Caco-2 (cell line): ENCODE measurements at regions of chr15 and their contacts with region 1.

Region 1: DNA sequence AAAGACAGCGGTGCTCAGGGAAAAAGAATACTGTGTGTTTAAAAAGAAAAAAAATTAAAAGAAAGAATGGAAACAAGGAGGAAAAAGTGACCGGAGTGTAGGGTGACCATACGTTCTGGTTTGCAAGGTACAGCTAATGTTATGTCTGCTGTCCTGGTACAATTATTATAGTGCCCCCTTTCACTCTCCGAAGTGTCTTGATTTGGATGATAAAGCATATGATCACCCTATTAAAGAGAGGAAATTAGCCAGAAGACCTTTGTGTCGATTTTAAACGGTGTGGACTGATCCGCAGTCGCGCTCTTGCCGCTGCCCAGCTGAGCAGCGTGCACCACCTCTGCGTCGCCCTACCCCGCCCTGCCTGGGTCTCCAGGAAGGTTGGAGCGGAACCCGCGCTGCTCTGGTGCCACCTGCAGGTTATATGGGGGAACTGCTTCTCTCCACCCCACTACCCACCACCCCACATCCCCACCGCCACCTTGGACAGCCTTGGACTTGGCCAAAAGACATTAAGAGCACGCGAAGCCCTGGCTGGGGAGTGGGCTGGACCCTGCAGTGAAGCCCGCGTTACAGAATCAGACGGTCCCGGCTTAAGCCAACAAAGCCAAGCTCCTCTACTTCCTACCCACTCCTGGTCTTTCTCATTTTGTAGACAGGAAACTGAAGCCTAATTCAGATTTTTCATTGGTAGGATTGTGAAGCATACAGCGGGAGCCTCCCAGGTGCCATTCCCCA is 41.2 kb upstream of the UBE2Q2 start:
- DNase-seq: peak; percentile 73 to 90
- H3K4me3 ChIP-seq: peak overlapping the region; percentile 28
- H3K4me3 Mint-ChIP-seq: peak overlapping the region; percentile 69
- H3K27ac Mint-ChIP-seq: no peak overlapping the region
- H3K4me1 ChIP-seq: no peaks in the 10 kb centered on the region
- H3K4me1 Mint-ChIP-seq: peaks cover 8% of the 10 kb centered on the region
- H3K27me3 ChIP-seq: no peaks in the 10 kb centered on the region
- H3K27me3 Mint-ChIP-seq: peaks cover 16% of the 10 kb centered on the region
- CTCF ChIP-seq: peak; percentile 81 to 83

Region 2: DNA sequence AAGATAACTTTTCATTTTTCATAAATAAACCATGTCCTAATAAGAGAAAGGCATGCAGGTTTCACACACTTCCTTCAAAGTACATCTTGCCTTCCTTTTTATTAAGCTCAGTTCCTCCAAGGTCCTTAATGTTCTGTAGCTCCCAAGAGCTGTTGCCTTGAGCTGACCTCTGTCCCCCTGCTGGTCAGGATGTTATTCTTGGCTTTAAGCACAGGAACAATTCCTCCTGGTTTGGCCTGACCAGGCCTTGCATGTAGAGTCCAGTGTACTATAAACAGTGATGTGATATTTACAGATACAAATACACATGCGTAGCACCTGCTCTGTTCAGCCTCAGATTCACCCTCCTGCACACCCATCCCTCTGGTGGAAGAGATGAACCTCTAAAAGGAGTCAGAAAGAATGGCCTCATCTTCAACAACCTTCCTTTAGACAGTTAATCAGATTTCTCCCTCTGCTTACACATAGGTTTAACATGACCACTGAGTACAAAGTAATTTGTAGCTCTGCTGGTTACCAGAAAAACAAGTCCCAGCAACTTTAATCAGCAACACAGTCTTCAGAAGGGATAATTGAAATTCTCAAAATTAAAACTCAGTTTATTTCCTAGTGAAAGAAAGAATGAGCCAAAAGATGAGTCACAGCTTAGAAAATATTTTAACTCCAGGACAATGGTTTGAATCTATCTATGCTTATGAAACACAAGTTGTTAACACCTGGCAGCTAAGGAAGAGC is 269.4 kb before region 1 on chr15:
- CTCF ChIA-PET with region 1: no interaction called
- POLR2A ChIA-PET with region 1: no interaction called
- intact Hi-C with region 1: loop called (anchors 2 kb)
- DNase-seq: peak; percentile 58 to 67
- H3K4me3 ChIP-seq: no peak overlapping the region
- H3K4me3 Mint-ChIP-seq: no peak overlapping the region
- H3K27ac Mint-ChIP-seq: no peak overlapping the region
- H3K4me1 ChIP-seq: peaks cover 23% of the 10 kb centered on the region
- H3K4me1 Mint-ChIP-seq: peaks cover 17% of the 10 kb centered on the region
- H3K27me3 ChIP-seq: no peaks in the 10 kb centered on the region
- H3K27me3 Mint-ChIP-seq: no peaks in the 10 kb centered on the region
- CTCF ChIP-seq: peak; percentile 48 to 68

Region 3: GRCh38 chr15:75639709-75640482 is 162.1 kb before region 1 on chr15 and contains the start of gene IMP3:
- CTCF ChIA-PET with region 1: no interaction called
- POLR2A ChIA-PET with region 1: no interaction called
- intact Hi-C with region 1: no loop called
- DNase-seq: peak; percentile 95
- H3K4me3 ChIP-seq: peak within 1 kb of the TSS; percentile 66
- H3K4me3 Mint-ChIP-seq: peak within 1 kb of the TSS; percentile 87
- H3K27ac Mint-ChIP-seq: peak within 1 kb of the TSS; percentile 92
- H3K4me1 ChIP-seq: peaks cover 4% of the 10 kb centered on the region; the same call in 1 of the 2 replicates
- H3K4me1 Mint-ChIP-seq: no peaks in the 10 kb centered on the region
- H3K27me3 ChIP-seq: no peaks in the 10 kb centered on the region
- H3K27me3 Mint-ChIP-seq: no peaks in the 10 kb centered on the region
- CTCF ChIP-seq: no peak
- total RNA-seq, gene IMP3: 58.4 and 60.4 TPM in 2 replicates

Region 4: DNA sequence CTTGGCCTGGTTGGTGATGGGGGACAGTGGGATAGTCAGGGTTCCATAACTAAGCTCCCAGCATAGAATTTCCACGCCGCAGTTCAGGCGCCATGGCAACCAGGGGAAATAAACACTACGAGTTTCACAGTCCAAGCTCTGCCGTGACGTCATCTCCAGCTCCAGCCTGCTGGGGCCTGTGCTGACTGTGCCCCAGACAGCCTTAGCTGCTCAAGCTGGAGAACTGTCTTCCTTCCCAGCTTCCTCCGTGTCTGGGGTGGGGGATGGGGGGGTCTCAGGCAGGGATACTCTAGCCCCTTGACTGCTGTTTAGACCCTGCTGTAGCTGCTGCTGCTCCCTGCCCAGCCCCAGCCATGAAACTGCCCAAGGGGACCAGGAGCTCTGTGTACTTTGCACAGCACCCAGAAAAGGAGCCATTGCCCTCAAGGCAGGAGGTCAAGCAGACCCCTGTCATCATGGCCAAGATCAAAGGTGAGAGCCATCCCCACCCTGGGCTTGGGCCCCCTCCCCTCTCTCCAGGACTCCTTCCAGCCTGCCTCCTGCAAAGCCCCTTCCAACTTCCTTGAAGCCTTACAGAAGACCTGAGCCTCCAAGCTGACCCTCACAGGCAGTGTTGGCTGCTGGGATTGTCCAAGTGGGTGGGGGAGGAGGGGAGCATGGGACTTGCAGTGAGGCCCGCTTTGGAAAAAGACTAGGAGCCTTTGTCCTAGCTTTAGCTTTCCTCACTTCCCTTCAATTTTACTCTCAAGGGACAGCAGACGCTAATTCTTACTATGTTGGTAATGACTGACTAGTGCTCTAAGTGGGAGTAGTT is 78.0 kb before region 1 on chr15:
- CTCF ChIA-PET with region 1: interaction called, 5 read pairs
- POLR2A ChIA-PET with region 1: no interaction called
- intact Hi-C with region 1: loop called (anchors 1 kb)
- DNase-seq: peak; percentile 80
- H3K4me3 ChIP-seq: no peak overlapping the region
- H3K4me3 Mint-ChIP-seq: no peak overlapping the region
- H3K27ac Mint-ChIP-seq: peak overlapping the region; percentile 76
- H3K4me1 ChIP-seq: peaks cover 10% of the 10 kb centered on the region
- H3K4me1 Mint-ChIP-seq: no peaks in the 10 kb centered on the region
- H3K27me3 ChIP-seq: no peaks in the 10 kb centered on the region
- H3K27me3 Mint-ChIP-seq: no peaks in the 10 kb centered on the region
- CTCF ChIP-seq: no peak

Region 5: GRCh38 chr15:75758071-75758872 is 43.8 kb before region 1 on chr15:
- CTCF ChIA-PET with region 1: no interaction called
- POLR2A ChIA-PET with region 1: no interaction called
- intact Hi-C with region 1: loop called (anchors 5 kb)
- DNase-seq: peak; percentile 91 to 93
- H3K4me3 ChIP-seq: peak overlapping the region; percentile 50
- H3K4me3 Mint-ChIP-seq: peak overlapping the region; percentile 96
- H3K27ac Mint-ChIP-seq: peak overlapping the region; percentile 97
- H3K4me1 ChIP-seq: peaks cover 8% of the 10 kb centered on the region; the same call in 1 of the 2 replicates
- H3K4me1 Mint-ChIP-seq: peaks cover 6% of the 10 kb centered on the region
- H3K27me3 ChIP-seq: no peaks in the 10 kb centered on the region
- H3K27me3 Mint-ChIP-seq: no peaks in the 10 kb centered on the region
- CTCF ChIP-seq: peak in 1 of 2 experiments; percentile 32